ENCODE measurements at regions of chr7 and their contacts with region 1.

Region 1: GRCh38 chr7:7542251-7542835 is 6.7 kb upstream of the COL28A1 start:
- DNase-seq: no peak
- ATAC-seq: no peak
- H3K4me3 ChIP-seq: no peak overlapping the region
- H3K27ac ChIP-seq: no peak overlapping the region
- H3K4me1 ChIP-seq: no peaks in the 10 kb centered on the region
- H3K27me3 ChIP-seq: no peaks in the 10 kb centered on the region

Region 2: DNA sequence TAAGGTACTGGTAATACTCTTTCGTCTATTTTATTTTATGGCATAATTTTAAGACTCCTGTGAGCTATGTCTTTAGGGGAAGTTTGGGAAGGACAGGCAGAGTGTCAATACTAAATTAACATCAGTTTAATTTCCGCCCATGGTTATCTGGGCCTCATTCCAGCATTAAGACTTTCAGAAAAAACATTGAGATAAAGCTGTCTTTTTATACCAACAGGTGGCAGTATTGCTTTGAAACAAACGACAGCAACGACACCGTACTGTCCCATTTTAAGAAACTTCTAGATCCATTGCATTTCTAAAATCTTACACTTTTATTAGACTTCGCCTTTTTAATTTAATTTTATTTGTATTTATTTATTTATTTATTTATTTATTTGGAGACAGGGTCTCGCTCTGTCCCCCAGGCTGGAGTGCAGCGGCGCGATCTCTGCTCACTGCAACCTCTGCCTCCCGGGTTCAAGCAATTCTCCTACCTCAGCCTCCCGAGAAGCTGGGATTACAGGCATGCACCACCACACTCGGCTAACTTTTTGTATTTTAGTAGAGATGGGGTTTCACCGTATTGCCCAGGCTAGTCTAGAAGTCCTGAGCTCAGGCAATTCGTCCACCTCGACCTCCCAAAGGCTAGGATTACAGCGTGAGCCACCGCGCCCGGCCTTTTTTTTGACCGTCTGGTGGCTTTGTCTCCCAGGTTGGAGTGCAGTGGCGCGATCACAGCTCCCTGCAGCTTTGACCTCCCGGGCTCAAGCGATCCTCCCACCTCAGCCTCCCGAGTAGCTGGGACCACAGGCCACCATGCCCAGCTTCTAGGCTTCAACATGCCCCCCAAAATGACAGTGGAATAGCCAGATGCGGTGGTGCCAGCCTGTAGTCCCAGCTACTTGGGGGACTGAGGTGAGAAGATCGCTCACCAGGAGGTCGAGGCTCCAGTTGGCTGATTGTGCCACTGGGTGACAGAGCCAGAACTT is 438.7 kb before region 1 on chr7:
- intact Hi-C with region 1: loop called (anchors 5 kb)
- DNase-seq: no peak
- ATAC-seq: peak; percentile 77
- H3K4me3 ChIP-seq: no peak overlapping the region
- H3K27ac ChIP-seq: no peak overlapping the region
- H3K4me1 ChIP-seq: no peaks in the 10 kb centered on the region
- H3K27me3 ChIP-seq: no peaks in the 10 kb centered on the region

Region 3: DNA sequence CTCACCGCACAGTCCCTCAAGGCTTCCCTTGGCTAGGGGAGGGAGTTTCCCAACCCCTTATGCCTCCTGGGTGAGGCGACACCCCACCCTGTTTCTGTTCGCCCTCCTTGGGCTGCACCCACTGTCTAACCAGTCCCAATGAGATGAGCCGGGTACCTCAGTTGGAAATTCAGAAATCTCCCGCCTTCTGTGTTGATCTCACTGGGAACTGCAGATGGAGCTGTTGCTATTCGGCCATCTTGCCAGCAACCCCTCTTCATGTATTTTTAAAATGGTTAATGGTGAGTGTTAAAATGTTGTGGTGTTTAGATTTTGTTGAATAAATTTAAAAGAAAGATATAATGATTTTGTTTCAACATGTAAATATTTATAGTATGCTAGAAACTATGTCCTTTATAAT is 120.2 kb after region 1 on chr7:
- intact Hi-C with region 1: no loop called
- DNase-seq: no peak
- ATAC-seq: no peak
- H3K4me3 ChIP-seq: no peak overlapping the region
- H3K27ac ChIP-seq: no peak overlapping the region
- H3K4me1 ChIP-seq: no peaks in the 10 kb centered on the region
- H3K27me3 ChIP-seq: no peaks in the 10 kb centered on the region

Measured in aorta (tissue), 5 donors.